OCI-LY7 (cell line): ENCODE measurements at regions of chr12 and their contacts with region 1.

Region 1: GRCh38 chr12:120194534-120195395 is at the start of gene GCN1:
- DNase-seq: peak; percentile 86
- H3K4me3 ChIP-seq: peak within 1 kb of the TSS; percentile 90
- H3K27ac ChIP-seq: peak within 1 kb of the TSS; percentile 95
- H3K4me1 ChIP-seq: peaks cover 81% of the 10 kb centered on the region
- CTCF ChIP-seq: no peak
- total RNA-seq, gene GCN1: 217 and 224 TPM in 2 replicates

Region 2: DNA sequence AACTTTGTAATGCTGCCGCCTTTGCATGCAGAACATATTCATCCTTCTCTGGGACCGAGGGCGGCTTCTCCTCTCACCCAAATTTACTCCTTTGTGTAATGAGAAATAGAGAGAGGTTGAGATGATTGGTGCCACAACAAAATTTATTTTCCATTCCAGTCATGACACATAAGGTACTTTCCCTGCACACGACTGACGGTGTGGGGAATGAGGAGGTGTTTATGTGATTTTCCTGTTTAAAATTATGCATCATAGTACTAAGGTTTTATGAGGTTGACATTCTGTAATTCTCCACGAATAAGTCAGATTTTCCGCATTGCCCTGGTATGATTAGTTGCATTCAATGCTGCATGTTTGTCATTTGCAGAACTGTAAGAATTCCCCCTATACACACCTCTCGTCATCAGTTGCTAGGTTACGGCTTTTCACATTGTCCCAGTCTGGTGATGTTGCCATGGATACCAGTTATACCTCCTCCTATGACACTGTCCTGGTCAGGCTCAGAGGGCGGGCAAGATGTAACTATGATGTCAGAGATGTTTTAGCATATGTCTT is 182.6 kb before region 1 on chr12:
- CTCF ChIA-PET with region 1: no interaction called
- POLR2A ChIA-PET with region 1: no interaction called
- intact Hi-C with region 1: no loop called
- DNase-seq: peak; percentile 6
- H3K4me3 ChIP-seq: no peak overlapping the region
- H3K27ac ChIP-seq: no peak overlapping the region
- H3K4me1 ChIP-seq: peaks cover 13% of the 10 kb centered on the region
- CTCF ChIP-seq: no peak

Region 3: GRCh38 chr12:120116792-120117651 is 77.7 kb before region 1 on chr12:
- CTCF ChIA-PET with region 1: no interaction called
- POLR2A ChIA-PET with region 1: interaction called, 86 read pairs
- intact Hi-C with region 1: loop called (anchors 5 kb)
- DNase-seq: peak; percentile 93
- H3K4me3 ChIP-seq: peak overlapping the region; percentile 90
- H3K27ac ChIP-seq: peak overlapping the region; percentile 77
- H3K4me1 ChIP-seq: peaks cover 56% of the 10 kb centered on the region
- CTCF ChIP-seq: no peak

Region 4: GRCh38 chr12:120132863-120133385 is 61.8 kb before region 1 on chr12:
- CTCF ChIA-PET with region 1: no interaction called
- POLR2A ChIA-PET with region 1: interaction called, 28 read pairs
- intact Hi-C with region 1: no loop called
- DNase-seq: peak; percentile 83
- H3K4me3 ChIP-seq: peak overlapping the region; percentile 39
- H3K27ac ChIP-seq: peak overlapping the region; percentile 92
- H3K4me1 ChIP-seq: peaks cover 33% of the 10 kb centered on the region
- CTCF ChIP-seq: no peak